AG04449 (cell line): ENCODE measurements at regions of chr1 and their contacts with region 1.

Region 1: GRCh38 chr1:204530932-204531331 is 14.7 kb downstream of the MDM4 start:
- DNase-seq: no peak
- H3K4me3 ChIP-seq: no peak overlapping the region
- CTCF ChIP-seq: no peak

Region 2: DNA sequence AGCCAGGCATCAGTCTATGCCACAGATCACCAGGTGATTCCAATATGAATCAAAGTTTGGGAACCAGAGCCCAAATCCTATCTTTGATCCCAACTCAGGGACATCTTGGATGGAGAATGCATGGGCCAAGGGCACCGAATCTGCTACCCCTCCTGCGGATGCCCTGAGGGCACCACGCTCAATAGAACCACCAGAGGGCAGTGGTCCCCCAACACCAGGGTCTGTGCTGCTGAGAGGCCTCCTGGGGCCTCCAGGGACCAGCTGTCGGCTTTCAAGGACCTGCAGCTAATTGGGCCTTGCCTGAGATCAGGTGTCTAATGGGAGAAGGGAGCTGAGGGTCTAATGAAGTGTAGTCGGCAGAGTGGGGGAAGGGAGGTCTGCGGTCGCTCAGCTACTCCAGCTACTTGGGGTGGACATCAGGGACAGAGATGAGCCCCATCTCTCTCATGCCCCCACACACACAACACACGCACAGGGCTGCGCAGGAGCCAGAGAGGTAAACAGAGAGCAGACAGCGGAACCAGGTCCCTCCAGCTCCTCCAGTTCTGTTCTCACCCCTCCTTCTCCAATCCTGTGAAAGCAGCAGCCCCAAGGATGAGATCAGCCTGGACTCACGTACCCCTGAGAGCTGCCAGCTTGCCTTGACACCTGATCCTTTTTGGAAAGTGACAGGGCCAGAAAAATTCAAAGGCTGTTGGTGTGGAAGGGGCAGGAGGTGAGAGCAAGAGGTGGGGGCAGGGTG is 84.4 kb before region 1 on chr1:
- CTCF ChIA-PET with region 1: no interaction called
- POLR2A ChIA-PET with region 1: no interaction called
- DNase-seq: no peak
- H3K4me3 ChIP-seq: no peak overlapping the region
- CTCF ChIP-seq: peak; percentile 85

Region 3: GRCh38 chr1:204477036-204477740 is 53.7 kb before region 1 on chr1:
- CTCF ChIA-PET with region 1: no interaction called
- POLR2A ChIA-PET with region 1: no interaction called
- DNase-seq: no peak
- H3K4me3 ChIP-seq: no peak overlapping the region
- CTCF ChIP-seq: no peak

Region 4: GRCh38 chr1:204516180-204516879 is 14.6 kb before region 1 on chr1 and contains the start of gene MDM4:
- CTCF ChIA-PET with region 1: interaction called, 10 read pairs
- POLR2A ChIA-PET with region 1: interaction called, 3 read pairs
- DNase-seq: peak; percentile 83
- H3K4me3 ChIP-seq: peak within 1 kb of the TSS; percentile 90
- CTCF ChIP-seq: no peak